Activated CD8-positive, alpha-beta T cell treated with anti-CD3 and anti-CD28 coated beads for 36 hours (primary cell): ENCODE measurements at regions of chr19 and their contacts with region 1.

Region 1: DNA sequence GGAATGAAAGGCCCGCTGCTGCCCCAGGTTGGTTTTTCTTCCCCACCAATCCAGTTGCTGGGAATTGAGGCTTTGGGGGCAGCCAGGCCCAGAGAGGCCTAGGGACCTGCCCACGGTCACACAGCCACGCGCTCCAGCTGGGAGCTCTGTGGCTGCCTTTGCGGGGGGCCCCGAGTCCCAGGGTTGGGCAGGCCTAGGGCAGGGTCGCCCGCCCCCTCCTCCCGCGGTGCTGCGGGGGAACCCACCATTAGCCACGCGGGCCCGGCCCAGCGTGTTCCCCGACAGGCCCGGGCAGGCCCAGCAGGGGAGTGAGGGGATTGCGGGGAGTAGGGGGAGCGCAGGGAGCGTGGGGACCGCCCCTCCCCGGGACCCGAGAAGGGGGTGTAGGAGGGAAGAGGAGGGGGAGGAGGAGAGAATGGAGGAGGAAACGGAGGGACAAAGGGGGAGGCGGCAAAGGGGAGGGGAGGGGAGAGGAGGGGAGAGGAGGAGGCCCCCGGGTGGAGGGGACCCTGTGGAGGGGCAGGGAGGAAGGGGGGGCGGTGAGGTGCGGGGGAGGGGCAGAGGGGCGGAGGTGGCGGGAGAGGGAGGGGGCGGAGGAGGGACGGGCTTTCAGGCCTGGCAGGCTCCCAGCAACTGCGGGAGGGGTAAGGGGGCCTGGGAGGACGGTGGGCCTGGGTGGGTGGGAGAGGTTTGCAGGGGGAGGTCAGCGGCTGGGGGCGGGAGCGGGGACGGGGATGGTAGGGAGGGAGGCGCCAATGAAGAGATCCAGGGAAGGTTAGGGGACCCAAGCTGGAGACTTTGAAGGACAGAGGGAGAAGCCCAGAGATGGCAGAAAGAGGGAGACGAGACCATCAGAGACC is 12.9 kb upstream of the TLE2 start:
- DNase-seq: no peak
- ATAC-seq: no peak
- H3K4me3 Mint-ChIP-seq: peak overlapping the region; percentile 2
- H3K27ac Mint-ChIP-seq: no peak overlapping the region
- H3K4me1 Mint-ChIP-seq: peaks cover 15% of the 10 kb centered on the region
- H3K27me3 Mint-ChIP-seq: no peaks in the 10 kb centered on the region
- CTCF ChIP-seq: no peak

Region 2: GRCh38 chr19:2992958-2993357 is 49.0 kb before region 1 on chr19:
- CTCF ChIA-PET with region 1: no interaction called
- POLR2A ChIA-PET with region 1: no interaction called
- intact Hi-C with region 1: no loop called
- DNase-seq: no peak
- ATAC-seq: no peak
- H3K4me3 Mint-ChIP-seq: no peak overlapping the region
- H3K27ac Mint-ChIP-seq: no peak overlapping the region
- H3K4me1 Mint-ChIP-seq: no peaks in the 10 kb centered on the region
- H3K27me3 Mint-ChIP-seq: no peaks in the 10 kb centered on the region
- CTCF ChIP-seq: no peak

Region 3: GRCh38 chr19:3057306-3057714 is 15.3 kb after region 1 on chr19:
- CTCF ChIA-PET with region 1: interaction called, 4 read pairs
- POLR2A ChIA-PET with region 1: interaction called, 17 read pairs
- intact Hi-C with region 1: no loop called
- DNase-seq: no peak
- ATAC-seq: no peak
- H3K4me3 Mint-ChIP-seq: no peak overlapping the region
- H3K27ac Mint-ChIP-seq: no peak overlapping the region
- H3K4me1 Mint-ChIP-seq: peaks cover 50% of the 10 kb centered on the region
- H3K27me3 Mint-ChIP-seq: no peaks in the 10 kb centered on the region
- CTCF ChIP-seq: no peak

Region 4: DNA sequence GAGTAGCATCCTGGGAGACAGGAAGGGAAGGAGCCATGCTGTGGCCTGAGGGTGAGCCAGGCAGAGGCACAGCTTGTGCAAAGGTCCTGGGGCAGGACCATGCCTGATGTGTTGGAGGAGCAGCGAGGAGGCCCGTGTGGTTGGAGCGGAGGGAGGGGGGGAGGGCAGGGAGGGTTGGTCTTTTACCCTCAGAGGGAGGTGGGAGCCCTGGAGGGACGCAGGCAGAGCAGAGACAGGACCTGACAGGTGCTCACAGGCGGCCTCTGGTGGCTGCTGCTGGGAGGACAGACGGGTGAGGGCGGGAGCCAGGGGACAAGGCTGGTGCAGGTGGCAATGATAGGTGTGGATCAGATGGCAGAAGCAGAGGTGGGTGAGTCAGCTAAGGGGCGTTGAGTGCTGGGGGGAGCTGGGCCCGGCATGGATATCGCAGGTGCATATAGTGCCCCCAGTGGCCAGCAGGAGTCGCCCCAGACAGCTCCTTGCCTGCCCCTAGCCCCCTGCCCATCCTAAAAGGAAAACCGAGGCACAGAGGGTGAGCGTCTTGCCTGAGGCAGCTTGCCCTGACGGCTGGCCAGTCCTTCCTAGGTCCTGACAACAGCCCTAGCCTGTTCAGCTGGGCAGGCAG is 84.0 kb after region 1 on chr19:
- CTCF ChIA-PET with region 1: no interaction called
- POLR2A ChIA-PET with region 1: no interaction called
- intact Hi-C with region 1: no loop called
- DNase-seq: peak; percentile 76
- ATAC-seq: peak; percentile 99
- H3K4me3 Mint-ChIP-seq: no peak overlapping the region
- H3K27ac Mint-ChIP-seq: no peak overlapping the region
- H3K4me1 Mint-ChIP-seq: peaks cover 7% of the 10 kb centered on the region
- H3K27me3 Mint-ChIP-seq: no peaks in the 10 kb centered on the region
- CTCF ChIP-seq: peak; percentile 83